HCT116 (cell line): ENCODE measurements at regions of chr2 and their contacts with region 1.

Region 1: DNA sequence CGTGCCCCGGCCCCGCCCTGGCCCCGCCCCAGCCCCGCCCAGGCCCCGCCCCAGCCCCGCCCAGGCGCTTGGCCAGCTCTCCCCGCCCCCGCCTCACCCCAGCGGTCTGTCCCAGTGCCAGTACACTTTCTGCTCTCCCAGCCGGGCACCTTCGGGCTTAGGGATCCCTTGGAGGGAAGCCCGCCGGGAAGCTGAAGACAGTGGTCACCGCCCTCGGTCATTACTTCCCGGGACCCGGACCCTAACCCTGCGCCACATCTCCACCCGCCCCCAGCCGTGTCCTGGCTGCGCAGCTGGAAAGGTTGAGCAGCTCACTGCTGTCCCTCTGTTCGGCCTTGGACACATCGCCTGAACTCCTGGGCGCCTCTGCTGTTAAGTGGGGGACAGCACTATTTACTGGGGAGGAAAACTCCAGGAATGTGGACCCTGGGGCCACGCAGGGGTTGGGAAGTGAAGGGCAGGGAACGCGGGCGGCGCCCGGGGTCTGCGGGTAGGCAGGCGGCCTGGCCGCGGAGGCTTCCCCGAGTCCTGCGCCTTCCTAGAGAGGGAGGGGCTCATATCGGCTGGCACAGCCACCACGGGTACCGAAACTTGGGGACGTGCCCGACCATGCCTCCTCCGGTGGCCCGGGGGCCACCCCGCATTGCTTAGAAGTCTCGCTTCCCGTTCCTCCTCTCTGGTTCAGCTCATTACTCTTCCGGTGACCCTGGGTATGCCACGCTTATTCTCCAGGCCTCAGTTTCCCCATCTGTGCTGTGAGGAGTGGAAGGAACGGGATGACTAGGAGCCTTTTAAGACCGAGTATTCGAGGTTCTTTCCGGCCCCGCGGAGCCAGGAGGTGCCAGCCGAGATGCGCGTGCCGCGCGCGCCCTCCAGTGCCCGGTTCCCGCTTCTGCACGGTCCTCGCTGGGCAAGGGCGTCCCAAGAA is 121.0 kb downstream of the GYPC start:
- DNase-seq: peak; percentile 22
- ATAC-seq: peak; percentile 95
- H3K4me3 ChIP-seq: no peak overlapping the region
- H3K27ac ChIP-seq: no peak overlapping the region; the same call in 1 of the 2 replicates
- H3K4me1 ChIP-seq: no peaks in the 10 kb centered on the region
- H3K27me3 ChIP-seq: no peaks in the 10 kb centered on the region
- CTCF ChIP-seq: peak; percentile 45 to 97 (median 91); a peak in 5 of 6 replicates
- POLR2A ChIP-seq: no peak
- RAD21 ChIP-seq: peak; percentile 91

Region 2: GRCh38 chr2:126359494-126359893 is 417.5 kb before region 1 on chr2:
- CTCF ChIA-PET with region 1: no interaction called
- POLR2A ChIA-PET with region 1: no interaction called
- RAD21 ChIA-PET with region 1: no interaction called
- intact Hi-C with region 1: no loop called
- DNase-seq: no peak
- ATAC-seq: no peak
- H3K4me3 ChIP-seq: no peak overlapping the region
- H3K27ac ChIP-seq: no peak overlapping the region
- H3K4me1 ChIP-seq: no peaks in the 10 kb centered on the region
- H3K27me3 ChIP-seq: no peaks in the 10 kb centered on the region
- CTCF ChIP-seq: peak in 2 of 3 experiments; percentile 13 to 20; a peak in 1 of 6 replicates
- POLR2A ChIP-seq: no peak
- RAD21 ChIP-seq: no peak

Region 3: DNA sequence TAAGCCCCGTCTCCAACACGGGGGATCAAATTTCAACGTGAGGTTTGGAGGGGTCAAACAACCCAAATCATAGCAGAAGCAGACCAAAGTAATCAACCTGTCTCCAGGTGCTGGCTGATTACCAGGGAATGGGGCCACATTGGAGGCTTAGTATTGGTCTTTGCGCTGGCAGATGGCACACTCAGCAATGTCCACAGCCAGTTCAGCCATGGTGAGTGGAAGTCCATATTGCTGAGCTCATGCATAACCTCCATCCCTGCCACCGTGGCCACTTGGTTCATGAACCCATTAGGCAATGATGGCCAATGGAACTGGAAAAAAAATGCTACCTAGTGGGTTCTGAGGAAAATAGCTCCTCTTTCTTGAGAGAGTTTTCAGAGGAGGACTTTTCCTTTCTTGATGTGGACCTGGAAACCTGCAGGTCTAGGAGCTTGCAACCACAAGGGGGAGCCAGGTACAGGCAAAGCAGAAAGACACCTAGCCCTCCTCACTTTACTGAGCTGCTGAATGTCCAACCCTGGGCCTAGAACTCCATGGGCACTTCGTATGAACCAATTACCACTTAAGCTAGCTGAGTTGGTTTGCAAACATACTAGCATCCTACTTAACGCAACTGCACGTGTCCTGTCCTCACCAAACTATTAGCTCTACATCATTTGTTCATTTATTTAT is 249.0 kb before region 1 on chr2:
- CTCF ChIA-PET with region 1: interaction called, 6 read pairs
- POLR2A ChIA-PET with region 1: no interaction called
- RAD21 ChIA-PET with region 1: no interaction called
- intact Hi-C with region 1: loop called (anchors 1 kb)
- DNase-seq: peak; percentile 13
- ATAC-seq: peak; percentile 74
- H3K4me3 ChIP-seq: no peak overlapping the region
- H3K27ac ChIP-seq: no peak overlapping the region
- H3K4me1 ChIP-seq: no peaks in the 10 kb centered on the region
- H3K27me3 ChIP-seq: no peaks in the 10 kb centered on the region
- CTCF ChIP-seq: peak; percentile 28 to 63 (median 62); a peak in 5 of 6 replicates
- POLR2A ChIP-seq: no peak
- RAD21 ChIP-seq: peak; percentile 48